K562 (cell line): ENCODE measurements at regions of chrX and their contacts with region 1.

Region 1: GRCh38 chrX:80578517-80579105 is 158.4 kb downstream of the TENT5D start:
- DNase-seq: peak; percentile 18 to 56 (median 21)
- ATAC-seq: peak; percentile 79
- H3K4me3 ChIP-seq: no peak overlapping the region
- H3K27ac ChIP-seq: no peak overlapping the region
- H3K4me1 ChIP-seq: no peaks in the 10 kb centered on the region; a peak in 1 of 5 replicates
- H3K27me3 ChIP-seq: no peaks in the 10 kb centered on the region
- CTCF ChIP-seq: peak; percentile 44 to 56 (median 45); a peak in 3 of 6 replicates
- EP300 ChIP-seq: no peak
- POLR2A ChIP-seq: no peak
- RAD21 ChIP-seq: peak; percentile 71 to 83

Region 2: DNA sequence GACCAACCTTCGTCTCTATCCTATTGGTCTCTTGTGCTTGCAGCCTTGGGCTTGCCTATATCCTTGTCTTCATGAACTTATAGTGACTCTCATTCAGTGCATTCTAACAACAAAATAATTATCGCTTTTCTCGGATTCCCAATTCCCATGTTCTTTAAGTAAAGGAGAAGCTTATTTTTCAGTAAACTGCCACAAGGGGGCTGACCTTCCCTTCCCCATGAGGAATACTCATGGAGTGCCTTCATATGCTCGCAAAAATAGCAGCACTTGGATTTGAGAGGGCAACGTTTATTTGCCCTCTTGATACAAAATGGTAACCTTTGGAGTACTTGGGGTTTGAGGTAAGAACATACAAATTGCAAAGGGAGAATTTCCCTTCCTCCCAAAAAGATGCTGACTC is 341.5 kb before region 1 on chrX:
- CTCF ChIA-PET with region 1: no interaction called
- POLR2A ChIA-PET with region 1: no interaction called
- in situ Hi-C with region 1: no loop called
- intact Hi-C with region 1: loop called (anchors 5 kb)
- DNase-seq: peak in 3 of 4 experiments; percentile 7 to 37 (median 11)
- ATAC-seq: no peak
- H3K4me3 ChIP-seq: no peak overlapping the region
- H3K27ac ChIP-seq: no peak overlapping the region
- H3K4me1 ChIP-seq: no peaks in the 10 kb centered on the region
- H3K27me3 ChIP-seq: no peaks in the 10 kb centered on the region
- CTCF ChIP-seq: peak in 2 of 3 experiments; percentile 34 to 35; a peak in 3 of 6 replicates
- EP300 ChIP-seq: no peak
- POLR2A ChIP-seq: no peak
- RAD21 ChIP-seq: peak in 1 of 2 experiments; percentile 23; a peak in 1 of 4 replicates

Region 3: DNA sequence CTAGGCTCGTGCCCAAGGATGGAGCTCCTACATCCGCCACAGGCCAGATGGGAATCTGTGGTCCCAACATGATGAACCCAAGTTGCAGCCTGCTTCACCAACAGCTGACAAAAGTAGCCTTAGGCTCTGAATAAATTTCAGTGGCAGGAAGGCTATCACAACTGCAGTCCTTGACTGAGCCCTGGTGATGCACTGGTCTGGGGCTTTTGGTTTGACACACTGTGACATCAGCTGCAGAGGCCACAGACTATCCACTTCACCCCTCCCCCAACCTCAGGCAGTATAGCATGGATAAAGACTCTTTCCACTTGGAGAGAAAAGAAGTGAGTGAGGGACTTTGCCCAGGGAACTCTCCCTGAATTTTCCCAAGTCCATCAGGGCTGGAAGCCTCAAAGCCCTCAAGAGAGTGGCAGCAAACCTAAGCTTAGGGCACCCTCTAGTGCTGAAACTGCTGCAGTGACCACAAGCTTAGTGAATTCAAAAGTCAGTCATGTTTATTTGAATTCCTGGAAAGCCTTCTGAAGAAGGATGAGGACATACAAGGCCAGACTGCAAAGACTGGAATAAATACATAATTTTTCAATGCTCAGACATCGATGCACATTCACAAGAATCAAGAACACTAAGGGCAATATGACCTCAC is 293.4 kb before region 1 on chrX:
- CTCF ChIA-PET with region 1: interaction called, 10 read pairs
- POLR2A ChIA-PET with region 1: no interaction called
- in situ Hi-C with region 1: loop called (anchors 25 kb)
- intact Hi-C with region 1: loop called (anchors 1 kb)
- DNase-seq: peak in 3 of 4 experiments; percentile 4 to 38 (median 6)
- ATAC-seq: peak; percentile 85
- H3K4me3 ChIP-seq: no peak overlapping the region
- H3K27ac ChIP-seq: no peak overlapping the region
- H3K4me1 ChIP-seq: no peaks in the 10 kb centered on the region
- H3K27me3 ChIP-seq: no peaks in the 10 kb centered on the region
- CTCF ChIP-seq: peak; percentile 36 to 48 (median 41); a peak in 4 of 6 replicates
- EP300 ChIP-seq: no peak
- POLR2A ChIP-seq: no peak
- RAD21 ChIP-seq: peak in 1 of 2 experiments; percentile 45; a peak in 1 of 4 replicates

Region 4: DNA sequence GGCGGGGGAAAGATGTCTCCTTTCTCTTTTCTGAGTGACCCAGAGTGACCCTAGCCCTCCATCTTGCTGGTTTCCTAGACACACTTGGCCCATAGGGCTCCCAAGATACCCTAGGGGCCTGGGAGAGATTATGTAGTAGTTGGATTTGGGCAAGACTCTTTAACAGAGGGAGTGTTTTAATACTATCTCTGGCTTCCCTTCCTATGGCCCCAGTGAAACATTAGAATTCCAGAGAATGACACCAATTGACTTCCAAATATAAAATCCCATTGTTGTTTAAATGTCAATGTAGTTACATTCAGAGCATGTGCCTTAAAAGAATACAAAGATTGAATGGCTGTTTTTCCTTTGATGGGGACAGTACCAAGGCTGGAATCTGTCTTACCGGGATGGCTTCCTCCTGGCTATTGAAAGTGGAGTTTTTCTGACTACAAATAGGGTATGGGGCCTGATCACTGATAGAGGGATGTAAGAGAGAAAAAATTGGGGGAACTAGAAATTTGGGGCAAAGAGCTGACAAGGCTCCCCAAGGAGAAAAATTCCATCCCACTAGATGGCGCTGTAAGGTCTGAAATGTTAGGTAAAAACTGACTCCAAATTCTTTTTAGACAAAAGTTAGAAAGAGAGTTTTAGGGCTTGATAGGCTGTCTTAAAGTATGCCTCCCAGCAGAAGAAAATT is 147.6 kb before region 1 on chrX:
- CTCF ChIA-PET with region 1: no interaction called
- POLR2A ChIA-PET with region 1: no interaction called
- in situ Hi-C with region 1: no loop called
- intact Hi-C with region 1: loop called (anchors 2 kb)
- DNase-seq: peak; percentile 14 to 47 (median 17)
- ATAC-seq: no peak
- H3K4me3 ChIP-seq: no peak overlapping the region
- H3K27ac ChIP-seq: no peak overlapping the region
- H3K4me1 ChIP-seq: no peaks in the 10 kb centered on the region
- H3K27me3 ChIP-seq: no peaks in the 10 kb centered on the region
- CTCF ChIP-seq: peak; percentile 10 to 33 (median 30); a peak in 2 of 6 replicates
- EP300 ChIP-seq: no peak
- POLR2A ChIP-seq: no peak
- RAD21 ChIP-seq: peak in 1 of 2 experiments; percentile 46; a peak in 2 of 4 replicates

Region 5: DNA sequence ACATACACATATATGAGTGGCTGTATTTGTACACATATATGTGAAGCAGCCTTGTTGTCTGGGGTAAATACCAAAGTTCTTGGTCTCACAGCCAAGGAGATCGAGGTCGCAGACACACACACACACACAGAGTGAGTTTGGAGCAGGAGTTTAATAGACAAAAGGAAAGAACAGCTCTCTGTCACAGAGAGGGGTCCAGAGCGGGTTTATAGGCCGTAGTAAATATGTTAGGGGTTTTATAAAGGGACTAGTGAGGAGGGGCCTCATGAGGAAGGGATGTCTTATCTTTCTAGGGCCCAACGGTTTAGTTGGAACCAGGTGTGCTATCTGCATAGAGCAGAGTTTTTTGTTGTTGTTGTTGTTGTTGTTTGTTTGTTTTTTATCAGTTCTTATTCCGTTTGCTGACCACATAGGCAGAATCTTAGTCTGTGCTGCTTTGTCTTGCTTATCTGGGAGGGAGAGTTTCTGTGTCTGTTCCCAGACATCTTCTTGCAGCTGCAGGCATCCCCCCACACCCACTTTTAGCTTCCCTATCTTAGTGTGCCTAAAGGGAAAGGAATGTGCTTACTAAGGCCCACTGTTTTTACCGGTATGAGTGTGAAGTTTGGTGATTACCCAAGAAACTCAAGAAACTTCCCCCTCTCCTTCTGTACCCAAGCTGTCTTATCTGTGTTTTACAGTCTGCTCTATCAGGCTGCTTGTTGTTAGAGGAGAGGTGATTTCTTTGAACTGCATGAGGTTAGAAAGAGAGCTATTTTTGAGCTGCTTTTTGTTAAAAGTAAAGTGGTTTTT is 66.4 kb before region 1 on chrX:
- CTCF ChIA-PET with region 1: no interaction called
- POLR2A ChIA-PET with region 1: no interaction called
- in situ Hi-C with region 1: no loop called
- intact Hi-C with region 1: loop called (anchors 5 kb)
- DNase-seq: peak; percentile 36 to 87 (median 54)
- ATAC-seq: peak; percentile 95
- H3K4me3 ChIP-seq: no peak overlapping the region
- H3K27ac ChIP-seq: peak overlapping the region; percentile 86
- H3K4me1 ChIP-seq: peaks cover 0 to 8% of the 10 kb centered on the region in 2 experiments; a peak in 3 of 5 replicates
- H3K27me3 ChIP-seq: no peaks in the 10 kb centered on the region
- CTCF ChIP-seq: no peak
- EP300 ChIP-seq: peak; percentile 88
- POLR2A ChIP-seq: no peak
- RAD21 ChIP-seq: peak in 1 of 2 experiments; percentile 12; a peak in 1 of 4 replicates